Prostate gland (tissue), 2 donors: ENCODE measurements at regions of chr1 and their contacts with region 1.

Region 1: DNA sequence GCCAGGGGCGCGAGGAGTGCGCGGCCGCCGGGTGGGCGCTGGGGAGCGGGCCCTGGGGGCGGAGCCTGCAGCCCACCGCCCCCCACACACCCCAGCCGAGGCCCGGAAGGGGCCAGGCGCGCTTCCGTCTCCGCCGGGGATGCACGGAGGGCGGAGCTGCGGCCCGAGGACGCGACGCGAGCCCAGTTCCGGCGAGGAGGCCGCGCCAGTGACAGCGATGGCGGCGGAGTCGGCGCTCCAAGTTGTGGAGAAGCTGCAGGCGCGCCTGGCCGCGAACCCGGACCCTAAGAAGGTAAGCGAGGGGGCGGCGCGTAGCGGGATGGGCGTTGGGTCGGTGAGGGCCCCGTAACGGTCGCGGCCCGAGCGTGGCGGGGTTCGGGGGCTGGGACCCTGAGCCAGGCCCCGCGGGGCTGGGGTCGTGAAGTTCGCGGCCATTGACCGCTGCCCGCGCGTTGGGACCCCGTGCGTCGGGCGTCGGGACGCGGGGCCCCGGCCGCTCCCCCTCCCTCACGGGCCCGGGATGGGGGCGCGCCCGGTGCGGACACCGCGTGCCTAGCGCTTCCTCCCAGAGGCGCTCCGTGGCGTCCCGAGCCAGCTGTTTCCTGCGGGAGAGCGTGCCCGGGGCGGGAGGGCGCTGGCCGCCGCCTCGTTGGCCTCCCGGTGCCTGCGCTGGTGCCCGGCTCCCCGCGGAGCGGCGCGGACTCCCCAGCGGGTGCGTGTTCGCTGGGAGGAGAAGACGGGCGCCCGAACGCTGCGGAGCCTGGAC is at the start of gene ELOA:
- DNase-seq: peak; percentile 57
- H3K4me3 ChIP-seq: peak within 1 kb of the TSS; percentile 88 to 92
- H3K27ac ChIP-seq: peak within 1 kb of the TSS; percentile 88 to 89
- H3K4me1 ChIP-seq: peaks cover 5% of the 10 kb centered on the region
- H3K27me3 ChIP-seq: no peaks in the 10 kb centered on the region
- CTCF ChIP-seq: peak in 1 of 4 experiments; percentile 11
- POLR2A ChIP-seq: peak; percentile 64
- total RNA-seq, gene ELOA: 35.7 to 42.1 TPM

Region 2: DNA sequence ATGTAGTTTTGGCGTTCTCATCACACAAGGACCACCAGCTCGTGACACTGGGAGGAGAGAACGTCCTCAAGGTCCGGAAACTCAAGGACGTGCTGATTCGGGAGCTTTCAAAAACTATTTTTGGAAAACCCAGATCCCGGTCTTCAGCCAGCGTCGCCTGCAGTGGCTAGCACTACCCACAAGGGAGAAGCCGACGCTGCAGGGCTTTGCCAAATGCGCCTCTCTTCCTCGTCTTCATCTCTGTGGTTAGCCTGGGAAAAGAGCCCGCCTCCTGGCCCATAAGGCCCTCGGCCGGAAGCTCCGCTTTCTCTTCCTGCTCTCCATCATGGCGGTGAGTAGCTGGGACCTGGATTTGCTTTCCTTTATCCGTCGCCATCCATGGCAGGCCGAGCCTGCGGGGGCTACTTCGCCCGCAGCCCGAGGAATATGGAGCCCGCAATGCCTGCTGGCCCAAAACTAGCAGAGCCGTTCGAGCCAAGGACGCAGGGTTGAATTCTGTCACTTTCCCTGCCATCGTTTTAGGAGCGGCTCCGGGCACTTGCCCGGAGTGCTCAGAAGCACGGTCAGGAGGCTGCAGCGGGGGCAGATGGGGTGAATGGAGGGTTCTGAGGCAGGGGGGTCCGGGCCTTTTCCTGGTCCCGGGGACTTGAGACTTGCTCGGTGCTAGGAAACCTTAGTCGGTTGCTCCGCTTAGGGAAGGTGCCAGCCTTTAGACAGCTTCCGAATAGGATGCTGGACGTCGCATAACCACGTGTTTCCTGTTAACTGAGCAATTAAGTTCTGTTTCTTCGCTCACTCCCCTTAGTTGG is 51.8 kb before region 1 on chr1 and contains the start of gene RPL11:
- intact Hi-C with region 1: loop called (anchors 5 kb)
- DNase-seq: peak; percentile 94
- H3K4me3 ChIP-seq: peak within 1 kb of the TSS; percentile 63
- H3K27ac ChIP-seq: peak within 1 kb of the TSS; percentile 67 to 73
- H3K4me1 ChIP-seq: peaks cover 12% of the 10 kb centered on the region
- H3K27me3 ChIP-seq: no peaks in the 10 kb centered on the region
- CTCF ChIP-seq: peak; percentile 52 to 94 (median 86)
- POLR2A ChIP-seq: peak; percentile 53
- total RNA-seq, gene RPL11: 784 to 1,458 TPM